ENCODE measurements at regions of chr15 and their contacts with region 1.

Region 1: GRCh38 chr15:88913017-88913849 is at the start of gene MFGE8:
- DNase-seq: peak; percentile 74
- H3K4me3 Mint-ChIP-seq: peak within 1 kb of the TSS; percentile 91
- H3K27ac Mint-ChIP-seq: peak within 1 kb of the TSS; percentile 79
- H3K4me1 Mint-ChIP-seq: peaks cover 17% of the 10 kb centered on the region
- H3K27me3 Mint-ChIP-seq: no peaks in the 10 kb centered on the region
- total RNA-seq, gene MFGE8: 28.2 to 31.6 TPM

Region 2: DNA sequence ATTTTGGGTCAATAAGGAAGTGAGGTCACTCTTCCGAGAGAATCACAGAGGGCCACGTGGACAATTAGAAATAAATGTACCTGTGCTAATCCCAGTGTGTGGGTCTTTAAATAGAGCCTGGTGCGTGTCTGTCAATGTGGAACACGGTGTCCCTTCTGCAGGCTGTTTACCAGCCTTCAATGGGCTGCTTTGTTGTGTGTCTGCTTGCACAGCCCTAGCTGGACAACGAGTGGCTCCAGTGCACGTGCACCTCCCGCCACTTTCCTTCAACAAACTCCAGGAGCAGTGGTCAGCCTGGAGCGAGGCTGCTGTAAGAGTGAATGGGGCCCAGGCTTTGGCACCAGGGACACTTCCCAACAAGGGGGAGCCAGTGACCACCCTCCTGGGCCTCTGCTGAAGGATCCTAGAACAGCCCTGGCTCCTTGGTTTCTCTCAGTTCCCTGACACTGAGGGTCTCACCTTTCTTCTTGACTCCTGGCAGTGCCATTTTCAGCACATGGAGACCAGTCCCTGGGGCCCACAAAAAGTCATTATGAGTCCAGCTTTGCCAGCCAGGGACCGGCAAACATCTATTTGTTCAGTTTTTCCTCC is 198.4 kb before region 1 on chr15:
- CTCF ChIA-PET with region 1: no interaction called
- intact Hi-C with region 1: no loop called
- DNase-seq: no peak
- H3K4me3 Mint-ChIP-seq: no peak overlapping the region
- H3K27ac Mint-ChIP-seq: no peak overlapping the region
- H3K4me1 Mint-ChIP-seq: no peaks in the 10 kb centered on the region
- H3K27me3 Mint-ChIP-seq: peaks cover 7% of the 10 kb centered on the region

Region 3: GRCh38 chr15:89017370-89018066 is 104.3 kb after region 1 on chr15:
- CTCF ChIA-PET with region 1: interaction called, 3 read pairs
- intact Hi-C with region 1: loop called (anchors 2 kb)
- DNase-seq: peak; percentile 93
- H3K4me3 Mint-ChIP-seq: peak overlapping the region; percentile 43
- H3K27ac Mint-ChIP-seq: no peak overlapping the region
- H3K4me1 Mint-ChIP-seq: peaks cover 12% of the 10 kb centered on the region
- H3K27me3 Mint-ChIP-seq: peaks cover 3% of the 10 kb centered on the region

Measured in activated naive CD4-positive, alpha-beta T cell treated with anti-CD3 and anti-CD28 coated beads for 36 hours (primary cell).